MCF 10A (cell line): ENCODE measurements at regions of chr7 and their contacts with region 1.

Region 1: GRCh38 chr7:99489235-99489634 is 10.8 kb downstream of the ZNF394 start:
- DNase-seq: no peak
- H3K4me3 Mint-ChIP-seq: no peak overlapping the region
- H3K27ac Mint-ChIP-seq: no peak overlapping the region
- H3K4me1 Mint-ChIP-seq: peaks cover 6% of the 10 kb centered on the region
- H3K27me3 Mint-ChIP-seq: no peaks in the 10 kb centered on the region
- CTCF ChIP-seq: no peak

Region 2: GRCh38 chr7:99422186-99422585 is 67.0 kb before region 1 on chr7:
- CTCF ChIA-PET with region 1: no interaction called
- POLR2A ChIA-PET with region 1: no interaction called
- intact Hi-C with region 1: no loop called
- DNase-seq: no peak
- H3K4me3 Mint-ChIP-seq: no peak overlapping the region
- H3K27ac Mint-ChIP-seq: no peak overlapping the region
- H3K4me1 Mint-ChIP-seq: no peaks in the 10 kb centered on the region
- H3K27me3 Mint-ChIP-seq: no peaks in the 10 kb centered on the region
- CTCF ChIP-seq: no peak

Region 3: GRCh38 chr7:99459087-99459486 is 30.1 kb before region 1 on chr7:
- CTCF ChIA-PET with region 1: no interaction called
- POLR2A ChIA-PET with region 1: no interaction called
- intact Hi-C with region 1: no loop called
- DNase-seq: peak; percentile 36
- H3K4me3 Mint-ChIP-seq: no peak overlapping the region
- H3K27ac Mint-ChIP-seq: peak overlapping the region; percentile 19
- H3K4me1 Mint-ChIP-seq: peaks cover 17% of the 10 kb centered on the region
- H3K27me3 Mint-ChIP-seq: no peaks in the 10 kb centered on the region
- CTCF ChIP-seq: no peak

Region 4: DNA sequence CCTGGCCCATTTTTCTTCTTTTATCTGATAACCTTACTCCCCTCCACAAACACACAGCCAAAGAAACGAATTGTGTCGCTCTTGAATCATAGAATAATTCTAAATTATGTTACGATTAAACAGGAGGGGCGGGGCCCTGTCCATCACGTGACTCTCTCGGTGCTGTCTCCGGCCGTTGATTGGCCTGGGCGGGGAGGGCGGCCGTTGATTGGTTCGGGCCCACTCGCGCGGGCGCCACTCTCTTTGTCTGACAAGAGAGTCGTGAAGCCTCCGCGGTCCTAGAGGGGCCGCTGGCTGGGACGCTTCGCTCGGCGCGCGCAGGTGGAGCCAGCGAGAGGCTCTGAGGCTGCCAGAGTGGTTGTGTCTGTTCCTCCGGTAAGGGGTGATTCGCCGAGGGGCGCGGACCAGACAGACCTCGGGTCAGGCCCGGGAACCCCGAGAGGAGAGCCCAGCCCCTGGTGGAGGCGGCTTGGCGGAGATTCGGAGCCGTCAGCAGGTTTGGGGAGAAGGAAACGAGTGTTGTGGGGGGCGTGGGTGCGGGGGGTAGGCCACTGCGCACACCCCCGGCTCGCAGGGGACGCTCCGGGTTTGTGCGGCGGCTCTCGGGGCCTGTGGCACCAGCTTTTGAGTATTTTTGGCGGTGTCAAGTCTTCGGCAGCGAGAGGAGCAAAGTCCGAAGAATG is 16.5 kb before region 1 on chr7 and contains the start of gene ZNF789:
- CTCF ChIA-PET with region 1: interaction called, 4 read pairs
- POLR2A ChIA-PET with region 1: interaction called, 18 read pairs
- intact Hi-C with region 1: no loop called
- DNase-seq: peak; percentile 96
- H3K4me3 Mint-ChIP-seq: peak within 1 kb of the TSS; percentile 91
- H3K27ac Mint-ChIP-seq: peak within 1 kb of the TSS; percentile 92
- H3K4me1 Mint-ChIP-seq: no peaks in the 10 kb centered on the region
- H3K27me3 Mint-ChIP-seq: no peaks in the 10 kb centered on the region
- CTCF ChIP-seq: no peak
- total RNA-seq, gene ZNF789: 15.0 and 19.9 TPM in 2 replicates